ENCODE measurements at regions of chr1 and their contacts with region 1.

Region 1: GRCh38 chr1:230066466-230067404 is at the start of gene GALNT2:
- DNase-seq: peak; percentile 95
- ATAC-seq: peak; percentile 86
- H3K4me3 ChIP-seq: peak within 1 kb of the TSS; percentile 63 to 86 (median 74)
- H3K4me3 Mint-ChIP-seq: peak within 1 kb of the TSS; percentile 96
- H3K27ac ChIP-seq: peak within 1 kb of the TSS; percentile 68 to 91
- H3K27ac Mint-ChIP-seq: peak within 1 kb of the TSS; percentile 77
- H3K4me1 ChIP-seq: peaks cover 18 to 20% of the 10 kb centered on the region in 2 donors
- H3K4me1 Mint-ChIP-seq: peaks cover 40% of the 10 kb centered on the region
- H3K27me3 ChIP-seq: no peaks in the 10 kb centered on the region
- H3K27me3 Mint-ChIP-seq: no peaks in the 10 kb centered on the region
- CTCF ChIP-seq: no peak
- total RNA-seq, gene GALNT2: 184 and 194 TPM in 2 replicates

Region 2: GRCh38 chr1:229558571-229559335 is 508.0 kb before region 1 on chr1 and contains the start of gene ABCB10:
- CTCF ChIA-PET with region 1: no interaction called
- POLR2A ChIA-PET with region 1: no interaction called
- intact Hi-C with region 1: loop called (anchors 2 kb)
- DNase-seq: peak; percentile 95
- ATAC-seq: peak; percentile 82
- H3K4me3 ChIP-seq: peak within 1 kb of the TSS; percentile 65 to 85 (median 69)
- H3K4me3 Mint-ChIP-seq: peak within 1 kb of the TSS; percentile 96
- H3K27ac ChIP-seq: peak within 1 kb of the TSS; percentile 43 to 68
- H3K27ac Mint-ChIP-seq: peak within 1 kb of the TSS; percentile 90
- H3K4me1 ChIP-seq: peaks cover 16 to 18% of the 10 kb centered on the region in 2 donors
- H3K4me1 Mint-ChIP-seq: peaks cover 32% of the 10 kb centered on the region
- H3K27me3 ChIP-seq: no peaks in the 10 kb centered on the region
- H3K27me3 Mint-ChIP-seq: no peaks in the 10 kb centered on the region
- CTCF ChIP-seq: peak; percentile 60
- total RNA-seq, gene ABCB10: 17.0 and 18.6 TPM in 2 replicates

Region 3: DNA sequence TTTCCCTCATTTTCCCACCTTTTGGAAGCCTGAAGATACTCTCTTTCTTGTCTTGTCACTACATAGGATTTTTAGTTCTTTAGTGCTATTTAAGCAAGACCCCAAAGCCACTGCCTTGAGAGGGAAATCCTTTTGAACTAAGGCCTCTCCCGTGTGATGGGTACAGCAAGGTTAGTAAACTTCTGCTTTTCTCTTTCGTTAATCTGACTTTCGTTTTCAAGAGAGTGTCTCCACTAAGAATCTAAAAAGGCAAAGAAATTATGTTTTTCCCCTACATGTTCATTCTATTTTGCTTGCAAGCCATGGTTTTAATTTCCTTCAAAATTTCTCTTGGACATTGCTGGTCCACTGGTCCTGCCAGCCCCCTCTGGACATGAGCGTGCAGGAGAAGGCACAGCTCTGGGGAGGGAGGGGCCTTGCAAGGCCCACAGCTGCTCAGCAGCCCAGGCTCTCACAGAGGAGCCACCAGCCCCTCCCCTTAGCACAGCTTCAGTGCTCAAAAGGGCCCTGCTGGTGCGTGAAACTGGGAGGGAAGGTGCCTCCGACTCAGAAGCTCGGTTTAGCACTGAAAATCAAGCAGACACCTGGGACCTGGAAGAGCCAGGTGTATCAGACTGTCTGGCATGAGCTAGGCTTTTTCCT is 210.6 kb before region 1 on chr1:
- CTCF ChIA-PET with region 1: no interaction called
- POLR2A ChIA-PET with region 1: no interaction called
- intact Hi-C with region 1: loop called (anchors 2 kb)
- DNase-seq: peak; percentile 82
- ATAC-seq: peak; percentile 99
- H3K4me3 ChIP-seq: peak overlapping the region; percentile 19 to 67 (median 46)
- H3K4me3 Mint-ChIP-seq: peak overlapping the region; percentile 96
- H3K27ac ChIP-seq: peak overlapping the region; percentile 85 to 90
- H3K27ac Mint-ChIP-seq: peak overlapping the region; percentile 97
- H3K4me1 ChIP-seq: peaks cover 34 to 35% of the 10 kb centered on the region in 2 donors
- H3K4me1 Mint-ChIP-seq: peaks cover 29% of the 10 kb centered on the region
- H3K27me3 ChIP-seq: no peaks in the 10 kb centered on the region
- H3K27me3 Mint-ChIP-seq: no peaks in the 10 kb centered on the region
- CTCF ChIP-seq: no peak

Region 4: DNA sequence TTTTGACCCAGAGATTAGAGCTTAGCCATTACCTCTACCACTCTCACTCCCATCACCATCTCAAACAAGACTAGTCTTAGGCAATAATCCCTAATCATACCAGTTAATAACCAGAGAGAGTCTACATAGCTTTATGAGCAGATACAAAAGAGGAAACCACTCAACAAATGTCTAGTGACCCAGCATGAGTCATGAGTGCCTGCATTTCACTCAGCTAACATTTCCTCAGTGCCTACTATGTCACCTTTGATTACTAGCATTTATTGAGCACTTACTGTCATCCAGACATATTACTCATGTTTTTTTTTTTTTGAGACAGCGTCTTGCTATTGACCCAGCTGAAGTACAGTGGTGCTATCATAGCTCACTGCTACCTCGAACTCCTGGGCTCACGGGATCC is 35.6 kb before region 1 on chr1:
- CTCF ChIA-PET with region 1: no interaction called
- POLR2A ChIA-PET with region 1: no interaction called
- intact Hi-C with region 1: no loop called
- DNase-seq: no peak
- ATAC-seq: no peak
- H3K4me3 ChIP-seq: no peak overlapping the region
- H3K4me3 Mint-ChIP-seq: no peak overlapping the region
- H3K27ac ChIP-seq: no peak overlapping the region
- H3K27ac Mint-ChIP-seq: no peak overlapping the region
- H3K4me1 ChIP-seq: no peaks in the 10 kb centered on the region
- H3K4me1 Mint-ChIP-seq: peaks cover 2% of the 10 kb centered on the region
- H3K27me3 ChIP-seq: no peaks in the 10 kb centered on the region
- H3K27me3 Mint-ChIP-seq: no peaks in the 10 kb centered on the region
- CTCF ChIP-seq: no peak

Region 5: DNA sequence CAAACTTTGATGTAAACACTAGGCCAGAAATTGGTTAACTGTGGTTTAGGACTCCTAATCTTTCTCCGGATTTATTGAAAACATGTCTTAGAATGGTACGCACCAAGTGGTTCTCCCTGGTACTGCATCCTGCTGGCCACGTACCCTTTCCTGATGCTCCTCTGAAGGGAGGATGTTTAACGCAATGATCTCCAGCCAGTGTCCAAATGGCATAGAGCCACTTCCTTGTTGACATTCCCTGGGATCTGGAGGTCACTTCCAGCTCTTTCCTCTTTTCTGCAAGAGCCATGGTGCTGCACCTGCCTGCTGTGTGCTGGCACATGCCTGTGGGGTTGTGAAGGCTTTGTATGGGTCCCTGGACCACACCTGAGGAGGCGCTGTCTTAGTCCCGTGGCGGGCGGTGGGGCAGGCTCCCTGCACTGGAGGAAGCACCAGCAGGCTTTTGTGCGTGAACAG is 54.2 kb after region 1 on chr1:
- CTCF ChIA-PET with region 1: interaction called, 4 read pairs
- POLR2A ChIA-PET with region 1: interaction called, 10 read pairs
- intact Hi-C with region 1: loop called (anchors 1 kb)
- DNase-seq: peak; percentile 49
- ATAC-seq: no peak
- H3K4me3 ChIP-seq: no peak overlapping the region
- H3K4me3 Mint-ChIP-seq: peak overlapping the region; percentile 16
- H3K27ac ChIP-seq: no peak overlapping the region
- H3K27ac Mint-ChIP-seq: no peak overlapping the region
- H3K4me1 ChIP-seq: peaks cover 55 to 75% of the 10 kb centered on the region in 2 donors
- H3K4me1 Mint-ChIP-seq: peaks cover 92% of the 10 kb centered on the region
- H3K27me3 ChIP-seq: no peaks in the 10 kb centered on the region
- H3K27me3 Mint-ChIP-seq: no peaks in the 10 kb centered on the region
- CTCF ChIP-seq: peak; percentile 73

Region 6: GRCh38 chr1:230167419-230167852 is 100.7 kb after region 1 on chr1:
- CTCF ChIA-PET with region 1: no interaction called
- POLR2A ChIA-PET with region 1: interaction called, 5 read pairs
- intact Hi-C with region 1: loop called (anchors 5 kb)
- DNase-seq: peak; percentile 75
- ATAC-seq: peak; percentile 55
- H3K4me3 ChIP-seq: no peak overlapping the region
- H3K4me3 Mint-ChIP-seq: peak overlapping the region; percentile 11
- H3K27ac ChIP-seq: no peak overlapping the region
- H3K27ac Mint-ChIP-seq: peak overlapping the region; percentile 0
- H3K4me1 ChIP-seq: peaks cover 19 to 23% of the 10 kb centered on the region in 2 donors
- H3K4me1 Mint-ChIP-seq: peaks cover 51% of the 10 kb centered on the region
- H3K27me3 ChIP-seq: no peaks in the 10 kb centered on the region
- H3K27me3 Mint-ChIP-seq: no peaks in the 10 kb centered on the region
- CTCF ChIP-seq: peak; percentile 89

Region 7: GRCh38 chr1:230270559-230271281 is 204.0 kb after region 1 on chr1:
- CTCF ChIA-PET with region 1: no interaction called
- POLR2A ChIA-PET with region 1: no interaction called
- intact Hi-C with region 1: loop called (anchors 10 kb)
- DNase-seq: peak; percentile 31
- ATAC-seq: peak; percentile 34
- H3K4me3 ChIP-seq: no peak overlapping the region
- H3K4me3 Mint-ChIP-seq: peak overlapping the region; percentile 58
- H3K27ac ChIP-seq: peak overlapping the region; percentile 0 to 64
- H3K27ac Mint-ChIP-seq: peak overlapping the region; percentile 73
- H3K4me1 ChIP-seq: peaks cover 35 to 42% of the 10 kb centered on the region in 2 donors
- H3K4me1 Mint-ChIP-seq: peaks cover 46% of the 10 kb centered on the region
- H3K27me3 ChIP-seq: no peaks in the 10 kb centered on the region
- H3K27me3 Mint-ChIP-seq: no peaks in the 10 kb centered on the region
- CTCF ChIP-seq: no peak

Measured in B cell (primary cell).